B cell (primary cell): ENCODE measurements at regions of chr5 and their contacts with region 1.

Region 1: DNA sequence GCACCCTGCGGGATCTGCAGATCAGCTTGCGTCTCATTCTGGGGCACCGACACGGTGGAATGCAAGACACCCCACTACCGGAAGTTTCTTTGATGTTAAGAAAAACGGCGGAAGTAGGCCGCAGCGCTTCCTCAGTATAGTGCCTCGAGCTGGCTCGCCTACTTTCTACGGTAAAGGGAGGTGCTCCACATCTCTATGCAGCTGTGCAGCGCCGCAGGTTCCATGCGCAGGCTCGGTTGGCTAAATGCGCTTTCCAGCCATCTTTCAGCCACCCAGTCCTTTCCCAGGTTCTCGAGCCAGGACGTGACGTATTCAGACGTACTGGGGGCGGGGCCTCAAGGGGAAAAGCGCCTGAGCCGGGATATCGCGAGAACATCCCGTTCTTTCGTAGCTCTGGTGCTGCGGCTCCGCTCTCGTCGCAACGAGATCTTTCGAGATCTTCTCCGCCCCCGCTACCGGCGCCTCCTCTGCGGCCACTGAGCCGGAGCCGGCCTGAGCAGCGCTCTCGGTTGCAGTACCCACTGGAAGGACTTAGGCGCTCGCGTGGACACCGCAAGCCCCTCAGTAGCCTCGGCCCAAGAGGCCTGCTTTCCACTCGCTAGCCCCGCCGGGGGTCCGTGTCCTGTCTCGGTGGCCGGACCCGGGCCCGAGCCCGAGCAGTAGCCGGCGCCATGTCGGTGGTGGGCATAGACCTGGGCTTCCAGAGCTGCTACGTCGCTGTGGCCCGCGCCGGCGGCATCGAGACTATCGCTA is at the start of gene HSPA4:
- DNase-seq: peak; percentile 100
- ATAC-seq: peak; percentile 87
- H3K4me3 ChIP-seq: peak within 1 kb of the TSS; percentile 89 to 93 (median 91)
- H3K4me3 Mint-ChIP-seq: peak within 1 kb of the TSS; percentile 97
- H3K27ac ChIP-seq: peak within 1 kb of the TSS; percentile 89 to 99
- H3K27ac Mint-ChIP-seq: peak within 1 kb of the TSS; percentile 100
- H3K4me1 ChIP-seq: peaks cover 37% of the 10 kb centered on the region in 2 donors
- H3K4me1 Mint-ChIP-seq: peaks cover 67% of the 10 kb centered on the region
- H3K27me3 ChIP-seq: no peaks in the 10 kb centered on the region
- H3K27me3 Mint-ChIP-seq: no peaks in the 10 kb centered on the region
- CTCF ChIP-seq: no peak
- total RNA-seq, gene HSPA4: 95.0 TPM in 2 replicates

Region 2: GRCh38 chr5:132866342-132867045 is 185.3 kb before region 1 on chr5 and contains the starts of genes GDF9 and UQCRQ:
- CTCF ChIA-PET with region 1: no interaction called
- POLR2A ChIA-PET with region 1: no interaction called
- intact Hi-C with region 1: loop called (anchors 1 kb)
- DNase-seq: peak; percentile 97
- ATAC-seq: peak; percentile 99
- H3K4me3 ChIP-seq: peak within 1 kb of the TSS; percentile 67 to 93 (median 81)
- H3K4me3 Mint-ChIP-seq: peak within 1 kb of the TSS; percentile 93
- H3K27ac ChIP-seq: peak within 1 kb of the TSS; percentile 92 to 93
- H3K27ac Mint-ChIP-seq: peak within 1 kb of the TSS; percentile 98
- H3K4me1 ChIP-seq: peaks cover 16 to 19% of the 10 kb centered on the region in 2 donors
- H3K4me1 Mint-ChIP-seq: peaks cover 26% of the 10 kb centered on the region
- H3K27me3 ChIP-seq: no peaks in the 10 kb centered on the region
- H3K27me3 Mint-ChIP-seq: no peaks in the 10 kb centered on the region
- CTCF ChIP-seq: no peak
- total RNA-seq, gene GDF9: 0.51 and 0.67 TPM in 2 replicates
- total RNA-seq, gene UQCRQ: 78.5 and 90.0 TPM in 2 replicates

Region 3: GRCh38 chr5:133006653-133007052 is 45.1 kb before region 1 on chr5:
- CTCF ChIA-PET with region 1: no interaction called
- POLR2A ChIA-PET with region 1: interaction called, 16 read pairs
- intact Hi-C with region 1: no loop called
- DNase-seq: no peak
- ATAC-seq: no peak
- H3K4me3 ChIP-seq: no peak overlapping the region
- H3K4me3 Mint-ChIP-seq: no peak overlapping the region
- H3K27ac ChIP-seq: no peak overlapping the region
- H3K27ac Mint-ChIP-seq: no peak overlapping the region
- H3K4me1 ChIP-seq: no peaks in the 10 kb centered on the region
- H3K4me1 Mint-ChIP-seq: peaks cover 10% of the 10 kb centered on the region
- H3K27me3 ChIP-seq: no peaks in the 10 kb centered on the region
- H3K27me3 Mint-ChIP-seq: no peaks in the 10 kb centered on the region
- CTCF ChIP-seq: no peak

Region 4: GRCh38 chr5:133025804-133026663 is 25.7 kb before region 1 on chr5 and contains the start of gene ZCCHC10:
- CTCF ChIA-PET with region 1: interaction called, 4 read pairs
- POLR2A ChIA-PET with region 1: interaction called, 83 read pairs
- intact Hi-C with region 1: loop called (anchors 1 kb)
- DNase-seq: peak; percentile 94
- ATAC-seq: peak; percentile 99
- H3K4me3 ChIP-seq: peak within 1 kb of the TSS; percentile 93 to 100 (median 98)
- H3K4me3 Mint-ChIP-seq: peak within 1 kb of the TSS; percentile 90
- H3K27ac ChIP-seq: peak within 1 kb of the TSS; percentile 92 to 98
- H3K27ac Mint-ChIP-seq: peak within 1 kb of the TSS; percentile 93
- H3K4me1 ChIP-seq: peaks cover 26 to 32% of the 10 kb centered on the region in 2 donors
- H3K4me1 Mint-ChIP-seq: peaks cover 42% of the 10 kb centered on the region
- H3K27me3 ChIP-seq: no peaks in the 10 kb centered on the region
- H3K27me3 Mint-ChIP-seq: no peaks in the 10 kb centered on the region
- CTCF ChIP-seq: no peak
- total RNA-seq, gene ZCCHC10: 30.6 and 34.0 TPM in 2 replicates

Region 5: GRCh38 chr5:134053840-134054338 is 1002.1 kb after region 1 on chr5:
- CTCF ChIA-PET with region 1: no interaction called
- POLR2A ChIA-PET with region 1: no interaction called
- intact Hi-C with region 1: no loop called
- DNase-seq: no peak
- ATAC-seq: no peak
- H3K4me3 ChIP-seq: no peak overlapping the region
- H3K4me3 Mint-ChIP-seq: no peak overlapping the region
- H3K27ac ChIP-seq: no peak overlapping the region
- H3K27ac Mint-ChIP-seq: no peak overlapping the region
- H3K4me1 ChIP-seq: peaks cover 0 to 6% of the 10 kb centered on the region in 2 donors
- H3K4me1 Mint-ChIP-seq: peaks cover 7% of the 10 kb centered on the region
- H3K27me3 ChIP-seq: no peaks in the 10 kb centered on the region
- H3K27me3 Mint-ChIP-seq: no peaks in the 10 kb centered on the region
- CTCF ChIP-seq: no peak